ENCODE measurements at regions of chr19 and their contacts with region 1.

Region 1: GRCh38 chr19:51097166-51097738 is 11.0 kb downstream of the CTU1 start:
- DNase-seq: peak; percentile 49 to 57 (median 56)
- H3K4me3 ChIP-seq: no peak overlapping the region
- H3K4me3 Mint-ChIP-seq: peak overlapping the region in 1 of 8 donors; percentile 36
- H3K27ac ChIP-seq: no peak overlapping the region
- H3K27ac Mint-ChIP-seq: peak overlapping the region in 6 of 7 donors; percentile 35 to 77 (median 47)
- H3K4me1 ChIP-seq: peaks cover 10% of the 10 kb centered on the region
- H3K4me1 Mint-ChIP-seq: peaks cover 19 to 35% (median 26%) of the 10 kb centered on the region in 4 donors
- H3K27me3 ChIP-seq: no peaks in the 10 kb centered on the region
- H3K27me3 Mint-ChIP-seq: no peaks in the 10 kb centered on the region

Region 2: GRCh38 chr19:51020988-51021651 is 76.1 kb before region 1 on chr19:
- CTCF ChIA-PET with region 1: interaction called, 6 read pairs
- POLR2A ChIA-PET with region 1: no interaction called
- intact Hi-C with region 1: loop called (anchors 2 kb)
- DNase-seq: peak in 4 of 5 donors; percentile 8 to 20 (median 13)
- H3K4me3 ChIP-seq: no peak overlapping the region
- H3K4me3 Mint-ChIP-seq: no peak overlapping the region
- H3K27ac ChIP-seq: no peak overlapping the region
- H3K27ac Mint-ChIP-seq: no peak overlapping the region
- H3K4me1 ChIP-seq: no peaks in the 10 kb centered on the region
- H3K4me1 Mint-ChIP-seq: peaks cover 7 to 24% (median 11%) of the 10 kb centered on the region in 4 donors
- H3K27me3 ChIP-seq: peaks cover 14% of the 10 kb centered on the region
- H3K27me3 Mint-ChIP-seq: peaks cover 33 to 35% of the 10 kb centered on the region in 2 donors

Region 3: DNA sequence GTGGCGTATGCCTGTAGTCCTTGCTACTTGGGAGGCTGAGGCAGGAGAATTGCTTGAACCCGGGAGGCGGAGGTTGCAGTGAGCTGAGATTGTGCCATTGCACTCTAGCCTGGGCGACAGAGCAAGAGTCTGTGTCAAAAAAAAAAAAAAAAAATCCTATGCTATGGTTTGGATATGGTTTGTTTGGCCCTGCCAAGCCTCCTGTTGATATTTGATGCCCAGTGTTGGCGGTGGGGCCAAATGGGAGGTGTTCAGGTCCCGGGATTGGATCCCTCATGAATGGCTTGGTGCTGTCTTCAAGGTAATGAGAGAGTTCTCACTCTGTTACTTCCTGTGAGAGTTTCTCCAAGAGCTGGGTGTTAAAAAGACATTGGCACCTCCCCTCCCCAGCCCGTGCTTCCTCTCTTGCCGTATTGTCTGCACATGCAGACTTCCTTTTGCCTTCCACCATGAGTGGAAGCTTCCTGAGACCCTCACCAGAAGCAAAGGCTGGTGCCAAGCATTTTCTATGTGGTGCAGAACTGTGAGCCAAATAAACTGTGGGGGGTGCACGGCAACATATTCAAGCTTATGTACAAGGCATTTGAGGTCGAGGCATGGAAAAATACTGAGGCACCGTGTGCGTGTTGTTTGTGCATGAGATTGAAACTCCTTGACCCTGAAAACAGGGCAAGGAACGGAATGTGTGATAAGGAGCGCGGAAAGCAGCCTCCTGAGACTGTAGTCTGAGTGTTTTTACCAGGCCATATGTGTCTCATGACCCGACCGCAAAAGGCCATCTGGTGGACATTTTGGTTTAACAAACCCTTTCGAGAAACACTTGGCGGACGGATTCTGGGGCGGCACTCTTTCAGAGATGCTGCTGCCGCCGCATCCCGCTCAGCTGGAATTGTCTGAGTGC is 34.8 kb after region 1 on chr19:
- CTCF ChIA-PET with region 1: interaction called, 6 read pairs
- POLR2A ChIA-PET with region 1: no interaction called
- intact Hi-C with region 1: loop called (anchors 5 kb)
- DNase-seq: peak in 4 of 5 donors; percentile 27 to 37 (median 32)
- H3K4me3 ChIP-seq: peak overlapping the region in 1 of 2 donors; percentile 32
- H3K4me3 Mint-ChIP-seq: peak overlapping the region; percentile 67 to 93 (median 82)
- H3K27ac ChIP-seq: no peak overlapping the region
- H3K27ac Mint-ChIP-seq: peak overlapping the region; percentile 47 to 89 (median 87)
- H3K4me1 ChIP-seq: peaks cover 59% of the 10 kb centered on the region
- H3K4me1 Mint-ChIP-seq: peaks cover 27 to 62% (median 43%) of the 10 kb centered on the region in 4 donors
- H3K27me3 ChIP-seq: no peaks in the 10 kb centered on the region
- H3K27me3 Mint-ChIP-seq: no peaks in the 10 kb centered on the region